ENCODE measurements at regions of chr1 and their contacts with region 1.

Region 1: GRCh38 chr1:39886757-39887231 is 3.5 kb upstream of the TRIT1 start:
- DNase-seq: no peak
- H3K4me3 ChIP-seq: no peak overlapping the region
- H3K27ac ChIP-seq: no peak overlapping the region
- H3K4me1 ChIP-seq: no peaks in the 10 kb centered on the region
- H3K27me3 ChIP-seq: no peaks in the 10 kb centered on the region
- CTCF ChIP-seq: no peak

Region 2: GRCh38 chr1:39738622-39739366 is 148.0 kb before region 1 on chr1 and contains the start of gene PPIE:
- CTCF ChIA-PET with region 1: no interaction called
- POLR2A ChIA-PET with region 1: no interaction called
- intact Hi-C with region 1: no loop called
- DNase-seq: peak; percentile 97
- H3K4me3 ChIP-seq: peak within 1 kb of the TSS; percentile 83
- H3K27ac ChIP-seq: peak within 1 kb of the TSS; percentile 82
- H3K4me1 ChIP-seq: peaks cover 9% of the 10 kb centered on the region
- H3K27me3 ChIP-seq: no peaks in the 10 kb centered on the region
- CTCF ChIP-seq: no peak
- total RNA-seq, gene PPIE: 62.8 and 71.0 TPM in 2 replicates

Region 3: GRCh38 chr1:39829791-39830533 is 56.8 kb before region 1 on chr1:
- CTCF ChIA-PET with region 1: no interaction called
- POLR2A ChIA-PET with region 1: interaction called, 11 read pairs
- intact Hi-C with region 1: no loop called
- DNase-seq: no peak
- H3K4me3 ChIP-seq: no peak overlapping the region
- H3K27ac ChIP-seq: no peak overlapping the region
- H3K4me1 ChIP-seq: no peaks in the 10 kb centered on the region
- H3K27me3 ChIP-seq: no peaks in the 10 kb centered on the region
- CTCF ChIP-seq: no peak

Region 4: DNA sequence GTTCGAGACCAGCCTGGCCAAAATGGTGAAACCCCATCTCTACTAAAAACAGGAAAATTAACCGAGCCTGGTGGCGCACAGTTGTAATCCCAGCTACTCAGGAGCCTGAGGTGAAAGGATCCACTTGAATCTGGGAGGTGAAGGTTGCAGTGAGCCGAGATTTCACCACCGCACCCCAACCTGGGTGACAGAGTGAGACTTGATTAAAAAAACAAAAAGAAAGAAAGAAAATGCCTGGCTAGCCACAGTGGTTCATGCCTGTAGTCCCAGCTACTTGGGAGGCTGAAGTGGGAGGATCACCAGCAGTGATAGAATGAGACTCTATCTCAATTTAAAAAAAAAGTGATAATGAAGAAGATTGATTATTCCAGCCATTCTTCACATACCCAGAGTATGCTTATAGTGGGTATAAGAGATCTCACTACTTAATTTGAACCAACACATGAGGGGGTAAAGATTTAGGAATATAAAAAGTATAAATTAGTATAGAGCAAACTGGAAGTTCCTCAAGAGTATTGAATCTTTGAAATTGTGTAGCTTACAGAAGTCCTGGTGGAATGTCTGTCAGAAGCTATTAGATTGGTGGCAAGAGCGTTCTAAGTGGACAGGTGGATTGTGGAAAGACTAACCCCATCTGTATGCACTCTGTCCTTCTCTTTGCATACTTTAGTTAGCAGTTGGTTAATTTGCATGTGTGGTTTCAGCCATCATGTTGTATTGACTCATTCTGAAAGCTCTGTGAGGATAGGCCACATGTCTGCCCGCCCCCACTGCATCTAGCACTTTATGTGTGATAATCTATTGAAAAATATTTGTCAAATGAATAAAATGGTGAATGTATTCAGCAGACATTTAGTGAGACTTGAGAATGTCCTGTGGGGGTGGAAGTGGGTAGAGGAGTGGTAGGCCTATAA is 299.4 kb after region 1 on chr1:
- CTCF ChIA-PET with region 1: no interaction called
- POLR2A ChIA-PET with region 1: no interaction called
- intact Hi-C with region 1: no loop called
- DNase-seq: peak; percentile 8
- H3K4me3 ChIP-seq: no peak overlapping the region
- H3K27ac ChIP-seq: no peak overlapping the region
- H3K4me1 ChIP-seq: peaks cover 13% of the 10 kb centered on the region
- H3K27me3 ChIP-seq: no peaks in the 10 kb centered on the region
- CTCF ChIP-seq: no peak

Region 5: GRCh38 chr1:41122851-41123507 is 1236.2 kb after region 1 on chr1:
- CTCF ChIA-PET with region 1: no interaction called
- POLR2A ChIA-PET with region 1: no interaction called
- intact Hi-C with region 1: no loop called
- DNase-seq: peak; percentile 84
- H3K4me3 ChIP-seq: no peak overlapping the region
- H3K27ac ChIP-seq: peak overlapping the region; percentile 7
- H3K4me1 ChIP-seq: peaks cover 6% of the 10 kb centered on the region
- H3K27me3 ChIP-seq: no peaks in the 10 kb centered on the region
- CTCF ChIP-seq: peak; percentile 63

Measured in A673 (cell line).